GM10248 (cell line): ENCODE measurements at regions of chr7 and their contacts with region 1.

Region 1: DNA sequence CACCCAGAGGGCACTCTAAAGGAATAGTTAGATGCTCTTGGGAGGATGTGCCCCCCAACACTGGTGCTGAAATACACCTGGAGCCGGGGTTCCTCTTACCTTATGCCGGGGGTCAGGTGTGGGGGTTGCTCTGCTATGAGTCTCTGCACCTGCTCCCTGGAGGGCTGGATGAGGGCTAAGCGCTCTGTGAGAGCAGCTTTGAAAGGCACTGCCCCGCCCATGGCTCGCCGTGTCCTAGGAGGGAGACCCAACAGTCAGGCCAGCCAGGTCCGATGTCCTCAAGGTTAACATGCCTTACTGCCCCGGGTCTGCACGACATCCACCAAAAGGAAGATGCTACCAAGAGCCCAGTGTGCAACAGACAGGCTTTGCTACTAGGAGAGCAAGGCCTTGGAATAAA is 31.7 kb downstream of the PSPH start:
- DNase-seq: no peak
- CTCF ChIP-seq: no peak

Region 2: DNA sequence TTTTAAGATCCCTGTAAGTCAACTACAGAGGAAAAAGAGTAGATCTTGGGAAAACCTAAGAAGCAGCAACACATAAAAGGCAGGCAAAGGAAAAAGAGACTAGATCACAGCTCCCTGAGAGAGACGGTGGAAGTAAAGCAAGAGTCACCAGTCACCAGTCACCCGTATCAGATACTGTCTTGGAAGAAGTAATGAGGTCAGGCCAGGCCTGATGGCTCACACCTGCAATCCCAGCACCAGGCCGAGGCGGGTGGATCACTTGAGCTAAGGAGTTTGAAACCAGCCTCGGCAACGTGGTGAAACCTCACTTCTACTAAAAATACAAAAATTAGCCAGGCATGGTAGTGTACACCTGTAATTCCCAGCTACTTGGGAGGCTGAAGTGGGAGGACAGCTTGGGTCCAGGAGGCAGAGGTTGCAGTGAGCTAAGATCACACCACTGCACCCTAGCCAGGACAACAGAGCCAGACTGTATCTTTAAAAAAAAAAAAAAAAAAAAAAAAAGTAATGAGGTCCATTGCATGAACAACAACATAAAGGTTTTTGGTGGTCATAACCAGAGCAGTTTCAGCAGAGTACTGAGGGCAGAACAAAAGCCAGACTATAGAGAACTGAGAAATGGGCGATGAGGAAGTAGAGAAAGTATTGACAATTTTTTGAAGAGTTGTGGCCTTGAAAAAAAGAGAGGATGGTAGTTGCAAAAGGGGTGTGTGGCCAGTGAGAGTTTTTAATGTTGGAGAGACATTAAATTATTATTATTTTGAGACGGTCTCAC is 115.3 kb before region 1 on chr7:
- CTCF ChIA-PET with region 1: no interaction called
- POLR2A ChIA-PET with region 1: no interaction called
- DNase-seq: peak; percentile 57
- CTCF ChIP-seq: no peak

Region 3: DNA sequence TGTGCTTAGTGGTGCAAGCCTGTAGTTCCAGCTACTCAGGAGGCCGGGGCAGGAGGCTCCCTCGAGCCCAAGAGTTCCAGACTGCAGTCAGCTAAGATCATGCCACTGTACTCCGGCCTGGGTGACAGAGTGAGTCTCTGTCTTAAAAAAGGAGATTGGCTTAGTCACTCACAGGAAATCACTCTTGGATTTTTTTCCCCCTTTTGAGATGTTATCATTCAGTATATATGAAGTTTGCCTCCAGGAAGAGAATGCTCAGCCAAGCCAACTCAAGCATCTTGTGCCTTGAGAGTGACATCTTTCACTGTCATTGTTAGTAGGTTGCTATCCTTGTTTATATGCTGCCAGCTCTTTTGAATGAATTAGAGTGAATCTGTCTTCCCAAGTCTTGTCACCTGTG is 27.2 kb before region 1 on chr7:
- CTCF ChIA-PET with region 1: no interaction called
- POLR2A ChIA-PET with region 1: no interaction called
- DNase-seq: no peak
- CTCF ChIP-seq: no peak

Region 4: GRCh38 chr7:56007167-56007652 is 12.3 kb before region 1 on chr7:
- CTCF ChIA-PET with region 1: interaction called, 39 read pairs
- POLR2A ChIA-PET with region 1: no interaction called
- DNase-seq: no peak
- CTCF ChIP-seq: no peak

Region 5: DNA sequence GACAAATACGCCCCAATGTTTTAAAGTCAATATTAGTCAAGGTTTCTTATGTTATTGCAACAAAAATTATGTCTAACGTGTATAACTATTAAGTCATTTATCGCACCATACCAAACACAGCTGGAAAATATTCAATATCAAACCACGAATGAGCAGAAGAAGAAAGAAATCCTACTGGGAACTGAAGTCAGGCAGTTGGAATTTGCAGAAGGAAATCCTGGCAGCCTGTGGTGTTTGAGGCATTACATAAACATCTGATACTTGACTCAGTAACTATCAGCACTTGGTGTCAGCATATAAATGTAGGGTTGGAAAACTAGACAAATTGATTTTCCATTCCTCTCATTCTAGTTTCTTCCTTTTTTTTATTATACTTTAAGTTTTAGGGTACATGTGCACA is 180.1 kb after region 1 on chr7:
- CTCF ChIA-PET with region 1: no interaction called
- POLR2A ChIA-PET with region 1: no interaction called
- DNase-seq: no peak
- CTCF ChIP-seq: no peak